Activated naive CD4-positive, alpha-beta T cell treated with anti-CD3 and anti-CD28 coated beads for 36 hours (primary cell): ENCODE measurements at regions of chr7 and their contacts with region 1.

Region 1: GRCh38 chr7:2978403-2978802 is 65.3 kb downstream of the CARD11 start:
- DNase-seq: peak; percentile 99
- H3K4me3 Mint-ChIP-seq: peak overlapping the region; percentile 76
- H3K27ac Mint-ChIP-seq: peak overlapping the region; percentile 98
- H3K4me1 Mint-ChIP-seq: peaks cover 70% of the 10 kb centered on the region
- H3K27me3 Mint-ChIP-seq: no peaks in the 10 kb centered on the region

Region 2: DNA sequence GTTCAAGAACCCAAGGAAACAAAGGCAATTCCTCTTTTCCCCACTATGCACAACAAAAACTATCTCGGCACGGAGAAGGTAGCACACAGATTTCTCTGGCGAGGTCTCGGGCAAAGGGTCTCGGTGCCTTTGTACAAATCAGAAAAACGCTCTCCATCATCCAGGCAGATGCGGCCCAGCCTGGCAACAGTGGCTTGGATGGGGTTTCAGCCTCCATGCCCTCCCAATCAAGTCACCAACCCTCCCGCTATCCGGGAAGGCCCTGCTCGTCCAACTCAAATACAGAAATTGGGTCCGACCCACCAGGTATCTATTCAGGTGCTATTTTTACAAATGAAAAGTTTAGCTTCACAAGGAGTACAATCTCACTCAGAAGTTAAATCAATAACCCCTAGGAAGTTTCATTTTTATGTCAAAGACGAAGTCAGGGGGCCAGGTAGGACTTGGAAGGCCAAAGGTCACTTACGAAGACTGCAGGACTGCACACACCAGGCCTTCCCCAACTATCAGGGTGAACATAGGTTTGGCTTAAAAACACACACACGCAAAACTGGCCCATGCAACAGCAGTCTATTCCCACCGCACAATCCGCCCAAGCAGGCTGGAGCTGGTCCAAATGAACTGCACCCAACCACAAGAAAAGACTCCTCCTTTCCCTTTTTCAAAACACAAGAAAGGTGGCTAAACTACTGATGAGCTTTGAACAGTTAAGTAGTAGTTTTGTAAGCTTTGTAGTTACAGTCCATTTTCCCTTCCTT is 177.3 kb before region 1 on chr7:
- CTCF ChIA-PET with region 1: no interaction called
- intact Hi-C with region 1: no loop called
- DNase-seq: peak; percentile 20
- H3K4me3 Mint-ChIP-seq: no peak overlapping the region
- H3K27ac Mint-ChIP-seq: no peak overlapping the region
- H3K4me1 Mint-ChIP-seq: peaks cover 41% of the 10 kb centered on the region
- H3K27me3 Mint-ChIP-seq: no peaks in the 10 kb centered on the region

Region 3: GRCh38 chr7:2894118-2894940 is 84.1 kb before region 1 on chr7:
- CTCF ChIA-PET with region 1: no interaction called
- intact Hi-C with region 1: loop called (anchors 1 kb)
- DNase-seq: peak; percentile 83
- H3K4me3 Mint-ChIP-seq: peak overlapping the region; percentile 73
- H3K27ac Mint-ChIP-seq: peak overlapping the region; percentile 96
- H3K4me1 Mint-ChIP-seq: peaks cover 24% of the 10 kb centered on the region
- H3K27me3 Mint-ChIP-seq: no peaks in the 10 kb centered on the region

Region 4: GRCh38 chr7:2956526-2957368 is 21.7 kb before region 1 on chr7:
- CTCF ChIA-PET with region 1: interaction called, 4 read pairs
- intact Hi-C with region 1: loop called (anchors 1 kb)
- DNase-seq: peak; percentile 83
- H3K4me3 Mint-ChIP-seq: no peak overlapping the region
- H3K27ac Mint-ChIP-seq: peak overlapping the region; percentile 89
- H3K4me1 Mint-ChIP-seq: peaks cover 78% of the 10 kb centered on the region
- H3K27me3 Mint-ChIP-seq: no peaks in the 10 kb centered on the region

Region 5: GRCh38 chr7:3042861-3043489 is 64.6 kb after region 1 on chr7:
- CTCF ChIA-PET with region 1: interaction called, 4 read pairs
- intact Hi-C with region 1: loop called (anchors 1 kb)
- DNase-seq: peak; percentile 90
- H3K4me3 Mint-ChIP-seq: peak overlapping the region; percentile 99
- H3K27ac Mint-ChIP-seq: peak overlapping the region; percentile 99
- H3K4me1 Mint-ChIP-seq: peaks cover 51% of the 10 kb centered on the region
- H3K27me3 Mint-ChIP-seq: no peaks in the 10 kb centered on the region